K562 (cell line): ENCODE measurements at regions of chr4 and their contacts with region 1.

Region 1: DNA sequence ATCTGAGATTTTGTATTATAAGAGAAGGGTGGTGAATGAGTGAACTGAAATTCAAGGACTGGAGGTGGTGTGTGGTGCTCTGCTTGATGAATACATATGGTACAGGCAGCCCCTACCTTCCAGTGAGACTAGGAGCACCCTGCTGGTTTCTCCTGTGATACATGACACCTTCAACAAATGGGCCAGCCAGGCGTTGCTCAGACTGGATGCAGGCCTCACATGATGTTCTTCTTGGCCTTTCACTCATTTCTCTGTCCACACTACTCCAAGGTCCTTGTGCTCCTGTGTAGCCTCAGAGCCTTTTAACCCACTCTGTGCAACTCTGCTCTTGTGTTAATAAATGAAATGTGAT is 67.2 kb downstream of the FNIP2 start:
- DNase-seq: no peak
- ATAC-seq: peak; percentile 73
- H3K4me3 ChIP-seq: no peak overlapping the region
- H3K27ac ChIP-seq: no peak overlapping the region
- H3K4me1 ChIP-seq: no peaks in the 10 kb centered on the region; a peak in 1 of 5 replicates
- H3K27me3 ChIP-seq: no peaks in the 10 kb centered on the region; a peak in 1 of 5 replicates
- CTCF ChIP-seq: no peak
- EP300 ChIP-seq: no peak
- POLR2A ChIP-seq: no peak
- RAD21 ChIP-seq: no peak

Region 2: GRCh38 chr4:158786121-158786601 is 49.8 kb before region 1 on chr4:
- CTCF ChIA-PET with region 1: no interaction called
- POLR2A ChIA-PET with region 1: no interaction called
- in situ Hi-C with region 1: no loop called
- intact Hi-C with region 1: loop called (anchors 5 kb)
- DNase-seq: no peak
- ATAC-seq: no peak
- H3K4me3 ChIP-seq: no peak overlapping the region
- H3K27ac ChIP-seq: peak overlapping the region; percentile 2; the same call in 1 of the 3 replicates
- H3K4me1 ChIP-seq: peaks cover 6 to 52% of the 10 kb centered on the region in 2 experiments; a peak in 4 of 5 replicates
- H3K27me3 ChIP-seq: no peaks in the 10 kb centered on the region
- CTCF ChIP-seq: no peak
- EP300 ChIP-seq: no peak
- POLR2A ChIP-seq: no peak
- RAD21 ChIP-seq: no peak

Region 3: GRCh38 chr4:158884280-158884679 is 48.3 kb after region 1 on chr4:
- CTCF ChIA-PET with region 1: no interaction called
- POLR2A ChIA-PET with region 1: no interaction called
- in situ Hi-C with region 1: no loop called
- intact Hi-C with region 1: no loop called
- DNase-seq: no peak
- ATAC-seq: no peak
- H3K4me3 ChIP-seq: no peak overlapping the region
- H3K27ac ChIP-seq: no peak overlapping the region
- H3K4me1 ChIP-seq: no peaks in the 10 kb centered on the region
- H3K27me3 ChIP-seq: no peaks in the 10 kb centered on the region
- CTCF ChIP-seq: no peak
- EP300 ChIP-seq: no peak
- POLR2A ChIP-seq: no peak
- RAD21 ChIP-seq: no peak